CD8-positive, alpha-beta T cell (primary cell): ENCODE measurements at regions of chr9 and their contacts with region 1.

Region 1: DNA sequence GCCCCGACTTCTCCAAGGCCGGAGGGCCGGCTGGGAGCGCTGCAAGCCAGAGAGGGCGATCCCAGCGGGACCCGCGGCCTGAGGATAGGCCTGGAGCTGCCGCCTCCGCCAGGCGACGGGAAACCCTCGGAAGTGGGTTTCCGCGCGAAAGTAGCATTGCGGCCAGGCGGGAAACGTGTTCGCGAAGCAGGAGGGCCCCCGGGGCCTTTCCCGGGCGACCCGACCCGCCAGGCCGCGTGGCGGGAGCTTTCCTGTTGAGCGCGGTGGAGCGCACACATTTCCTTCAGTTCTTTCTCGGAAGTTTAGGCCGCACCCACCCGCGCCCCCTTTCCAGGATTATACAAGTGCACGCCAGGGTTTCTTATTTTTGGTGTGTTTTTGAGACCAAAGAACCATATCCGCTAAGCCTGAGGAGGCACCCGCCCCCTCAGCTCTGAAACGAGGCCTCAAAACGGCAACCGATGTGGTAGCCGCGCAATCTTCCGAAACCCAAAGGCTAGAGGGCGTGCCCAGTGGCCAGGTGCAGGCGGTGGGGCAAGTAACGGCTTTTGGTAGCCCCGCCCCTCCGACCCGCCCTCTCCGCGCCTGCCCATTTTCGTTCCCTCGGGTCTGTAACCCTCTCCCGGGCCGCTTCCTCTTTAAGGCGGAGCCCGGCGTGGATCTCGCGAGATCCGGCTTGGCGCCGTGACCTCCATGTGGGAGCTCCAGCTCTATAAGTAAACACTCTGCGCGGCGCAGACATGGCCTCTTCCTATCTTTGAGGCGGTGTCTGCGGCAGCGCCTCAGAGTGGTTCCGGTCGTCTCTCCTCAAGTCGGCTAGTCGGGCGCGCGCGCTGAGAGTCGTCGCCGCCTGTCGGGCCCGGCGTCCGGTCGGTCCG is at the start of gene UHRF2:
- DNase-seq: peak; percentile 98 to 99 (median 99)
- ATAC-seq: peak; percentile 88
- H3K4me3 ChIP-seq: peak within 1 kb of the TSS; percentile 58 to 74
- H3K4me3 Mint-ChIP-seq: peak within 1 kb of the TSS; percentile 87
- H3K27ac ChIP-seq: peak within 1 kb of the TSS; percentile 80 to 83
- H3K27ac Mint-ChIP-seq: peak within 1 kb of the TSS; percentile 93
- H3K4me1 ChIP-seq: peaks cover 28% of the 10 kb centered on the region
- H3K4me1 Mint-ChIP-seq: peaks cover 34% of the 10 kb centered on the region
- H3K27me3 ChIP-seq: no peaks in the 10 kb centered on the region
- H3K27me3 Mint-ChIP-seq: no peaks in the 10 kb centered on the region
- CTCF ChIP-seq: no peak
- total RNA-seq, gene UHRF2: 140 to 159 TPM

Region 2: DNA sequence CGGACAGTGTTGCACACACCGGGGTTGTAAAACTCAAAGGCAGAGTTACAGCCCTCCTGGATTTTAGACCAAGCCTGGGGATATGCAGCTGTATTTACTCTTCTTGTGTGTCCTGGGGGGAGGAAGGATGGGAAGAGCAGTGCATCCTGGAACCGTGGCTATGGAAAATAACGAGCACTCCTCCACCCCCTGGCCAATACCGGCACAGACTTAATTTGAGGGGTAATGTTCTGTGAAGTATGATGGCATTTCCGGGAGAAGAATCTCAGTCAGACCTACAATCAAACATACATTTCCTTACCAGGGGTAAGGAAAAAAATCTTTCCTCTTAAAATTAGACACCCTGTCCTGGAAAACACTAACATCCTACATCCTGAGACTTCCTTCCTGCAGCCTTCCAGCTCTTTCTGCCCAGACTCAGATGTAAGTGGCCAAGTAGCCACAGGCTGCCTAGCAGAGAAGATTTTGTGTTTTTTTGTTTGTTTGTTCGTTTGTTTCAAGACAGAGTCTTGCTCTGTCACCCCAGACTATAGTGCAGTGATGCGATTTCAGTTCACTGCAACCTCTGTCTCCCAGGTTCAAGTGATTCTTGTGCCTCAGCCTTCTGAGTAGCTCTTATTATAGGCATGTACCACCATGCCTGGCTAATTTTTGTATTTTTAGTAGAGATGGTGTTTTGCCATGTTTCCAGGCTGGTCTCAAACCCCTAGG is 568.8 kb before region 1 on chr9:
- CTCF ChIA-PET with region 1: no interaction called
- POLR2A ChIA-PET with region 1: interaction called, 3 read pairs
- intact Hi-C with region 1: loop called in 1 of 2 experiments (anchors 10 kb)
- DNase-seq: peak in 1 of 9 experiments; percentile 35
- ATAC-seq: no peak
- H3K4me3 ChIP-seq: peak overlapping the region in 1 of 2 experiments; percentile 24
- H3K4me3 Mint-ChIP-seq: peak overlapping the region; percentile 65
- H3K27ac ChIP-seq: peak overlapping the region in 1 of 2 experiments; percentile 61
- H3K27ac Mint-ChIP-seq: peak overlapping the region; percentile 84
- H3K4me1 ChIP-seq: peaks cover 53% of the 10 kb centered on the region
- H3K4me1 Mint-ChIP-seq: peaks cover 63% of the 10 kb centered on the region
- H3K27me3 ChIP-seq: no peaks in the 10 kb centered on the region
- H3K27me3 Mint-ChIP-seq: no peaks in the 10 kb centered on the region
- CTCF ChIP-seq: no peak

Region 3: DNA sequence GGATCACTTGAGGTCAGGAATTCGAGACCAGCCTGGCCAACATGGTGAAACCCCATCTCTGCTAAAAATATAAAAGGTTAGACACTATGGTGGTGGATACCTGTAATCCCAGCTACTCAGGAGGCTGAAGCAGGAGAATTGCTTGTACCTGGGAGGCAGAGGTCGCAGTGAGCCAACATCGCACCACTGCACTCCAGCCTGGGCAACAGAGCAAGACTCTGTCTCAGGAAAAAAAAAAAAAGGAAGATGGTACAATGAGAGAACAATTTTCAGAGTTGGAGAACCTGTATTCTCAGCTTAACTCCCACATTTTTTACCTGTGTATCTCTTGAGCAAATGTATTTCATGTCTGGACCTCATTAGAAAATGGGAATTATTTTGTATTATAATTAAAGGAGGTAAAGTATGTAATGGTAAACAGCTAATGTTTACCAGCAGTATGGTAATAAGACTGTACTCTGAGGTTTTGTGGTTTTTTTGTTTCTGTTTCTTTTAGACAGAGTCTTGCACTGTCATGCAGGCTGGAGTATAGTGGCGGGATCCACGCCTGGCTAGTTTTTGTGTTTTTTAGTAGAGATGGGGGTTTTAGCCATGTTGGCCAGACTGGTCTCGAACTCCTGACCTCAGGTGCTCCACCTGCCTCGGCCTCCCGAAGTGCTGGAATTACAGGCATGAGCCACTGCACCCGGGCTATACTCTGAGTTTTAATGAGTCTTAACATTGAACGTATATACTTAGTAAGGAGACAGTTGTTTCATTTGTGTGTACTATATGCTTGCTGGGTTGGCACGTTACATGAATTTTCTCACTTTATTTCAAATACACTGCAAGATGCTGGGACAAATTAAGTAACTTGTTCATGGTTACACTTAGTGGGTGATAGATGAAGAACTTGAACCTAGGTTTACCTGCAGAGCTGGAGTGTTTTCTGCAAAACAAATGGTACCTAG is 16.5 kb after region 1 on chr9:
- CTCF ChIA-PET with region 1: interaction called, 6 read pairs
- POLR2A ChIA-PET with region 1: interaction called, 36 read pairs
- intact Hi-C with region 1: loop called in 1 of 2 experiments (anchors 2 kb)
- DNase-seq: peak in 3 of 9 experiments; percentile 16 to 64 (median 42)
- ATAC-seq: peak; percentile 79
- H3K4me3 ChIP-seq: no peak overlapping the region
- H3K4me3 Mint-ChIP-seq: peak overlapping the region; percentile 63
- H3K27ac ChIP-seq: peak overlapping the region in 1 of 2 experiments; percentile 48
- H3K27ac Mint-ChIP-seq: peak overlapping the region; percentile 41
- H3K4me1 ChIP-seq: peaks cover 29% of the 10 kb centered on the region
- H3K4me1 Mint-ChIP-seq: peaks cover 84% of the 10 kb centered on the region
- H3K27me3 ChIP-seq: no peaks in the 10 kb centered on the region
- H3K27me3 Mint-ChIP-seq: no peaks in the 10 kb centered on the region
- CTCF ChIP-seq: no peak

Region 4: GRCh38 chr9:6681147-6681956 is 268.6 kb after region 1 on chr9:
- CTCF ChIA-PET with region 1: no interaction called
- POLR2A ChIA-PET with region 1: interaction called, 30 read pairs
- intact Hi-C with region 1: loop called (anchors 1 to 2 kb)
- DNase-seq: peak; percentile 77 to 96 (median 89)
- ATAC-seq: peak; percentile 85
- H3K4me3 ChIP-seq: peak overlapping the region; percentile 84 to 97
- H3K4me3 Mint-ChIP-seq: peak overlapping the region; percentile 93
- H3K27ac ChIP-seq: peak overlapping the region; percentile 94 to 96
- H3K27ac Mint-ChIP-seq: peak overlapping the region; percentile 98
- H3K4me1 ChIP-seq: peaks cover 11% of the 10 kb centered on the region
- H3K4me1 Mint-ChIP-seq: peaks cover 22% of the 10 kb centered on the region
- H3K27me3 ChIP-seq: no peaks in the 10 kb centered on the region
- H3K27me3 Mint-ChIP-seq: no peaks in the 10 kb centered on the region
- CTCF ChIP-seq: no peak

Region 5: GRCh38 chr9:6757456-6758247 is 344.9 kb after region 1 on chr9 and contains the start of gene KDM4C:
- CTCF ChIA-PET with region 1: no interaction called
- POLR2A ChIA-PET with region 1: interaction called, 62 read pairs
- intact Hi-C with region 1: loop called (anchors 1 to 2 kb)
- DNase-seq: peak; percentile 88 to 98 (median 94)
- ATAC-seq: peak; percentile 74
- H3K4me3 ChIP-seq: peak within 1 kb of the TSS; percentile 79 to 80
- H3K4me3 Mint-ChIP-seq: peak within 1 kb of the TSS; percentile 96
- H3K27ac ChIP-seq: peak within 1 kb of the TSS; percentile 97
- H3K27ac Mint-ChIP-seq: peak within 1 kb of the TSS; percentile 100
- H3K4me1 ChIP-seq: peaks cover 15% of the 10 kb centered on the region
- H3K4me1 Mint-ChIP-seq: peaks cover 39% of the 10 kb centered on the region
- H3K27me3 ChIP-seq: no peaks in the 10 kb centered on the region
- H3K27me3 Mint-ChIP-seq: no peaks in the 10 kb centered on the region
- CTCF ChIP-seq: no peak
- total RNA-seq, gene KDM4C: 51.6 to 54.6 TPM